Activated CD8-positive, alpha-beta T cell treated with anti-CD3 and anti-CD28 coated beads, Interleukin-2, amount 10 ng/mL, durations not matched to agents 7 days and 5 days (primary cell): ENCODE measurements at regions of chr3 and their contacts with region 1.

Region 1: GRCh38 chr3:14178247-14179113 is at the starts of genes LSM3 and XPC:
- DNase-seq: peak; percentile 97
- ATAC-seq: peak; percentile 91
- H3K4me3 Mint-ChIP-seq: peak within 1 kb of the TSS; percentile 98
- H3K27ac Mint-ChIP-seq: peak within 1 kb of the TSS; percentile 99
- H3K4me1 Mint-ChIP-seq: peaks cover 62% of the 10 kb centered on the region
- H3K27me3 Mint-ChIP-seq: no peaks in the 10 kb centered on the region
- total RNA-seq, gene LSM3: 19.2 to 20.2 TPM
- total RNA-seq, gene XPC: 29.4 to 31.6 TPM

Region 2: GRCh38 chr3:13895155-13896105 is 283.1 kb before region 1 on chr3:
- CTCF ChIA-PET with region 1: interaction called, 21 read pairs
- POLR2A ChIA-PET with region 1: interaction called, 10 read pairs
- DNase-seq: peak; percentile 98
- ATAC-seq: peak; percentile 99
- H3K4me3 Mint-ChIP-seq: peak overlapping the region; percentile 84
- H3K27ac Mint-ChIP-seq: peak overlapping the region; percentile 81
- H3K4me1 Mint-ChIP-seq: peaks cover 33% of the 10 kb centered on the region
- H3K27me3 Mint-ChIP-seq: peaks cover 2% of the 10 kb centered on the region

Region 3: DNA sequence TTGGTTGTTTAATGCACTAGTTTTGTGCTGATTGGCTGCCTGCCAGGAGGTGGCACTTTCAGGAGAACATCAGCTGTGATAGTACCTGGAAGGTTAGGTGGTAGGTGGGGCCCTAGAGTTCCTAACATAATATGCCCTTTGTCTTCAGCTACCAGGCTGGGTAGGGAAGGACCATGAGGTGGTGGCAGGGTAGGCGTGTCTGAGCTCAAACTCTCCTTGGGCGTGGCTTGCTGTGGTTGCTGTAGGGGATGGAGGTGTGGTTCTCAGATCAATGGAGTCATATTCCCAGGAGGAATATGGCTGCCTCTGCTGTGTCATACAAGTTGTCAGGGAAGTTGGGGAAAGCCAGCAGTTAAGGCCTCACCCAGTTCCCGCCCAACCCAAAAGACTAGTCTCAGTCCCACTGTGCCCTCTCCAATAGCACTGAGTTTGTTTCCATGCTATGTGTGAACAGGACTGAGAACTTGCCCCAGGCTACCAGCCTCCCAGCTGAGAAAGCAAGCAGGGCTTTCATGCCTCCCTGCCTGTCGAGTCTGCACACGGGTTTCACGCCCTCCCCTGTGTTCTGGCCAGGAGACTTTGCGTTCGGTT is 161.5 kb before region 1 on chr3:
- CTCF ChIA-PET with region 1: no interaction called
- POLR2A ChIA-PET with region 1: no interaction called
- DNase-seq: no peak
- ATAC-seq: no peak
- H3K4me3 Mint-ChIP-seq: no peak overlapping the region
- H3K27ac Mint-ChIP-seq: no peak overlapping the region
- H3K4me1 Mint-ChIP-seq: no peaks in the 10 kb centered on the region
- H3K27me3 Mint-ChIP-seq: peaks cover 31% of the 10 kb centered on the region

Region 4: DNA sequence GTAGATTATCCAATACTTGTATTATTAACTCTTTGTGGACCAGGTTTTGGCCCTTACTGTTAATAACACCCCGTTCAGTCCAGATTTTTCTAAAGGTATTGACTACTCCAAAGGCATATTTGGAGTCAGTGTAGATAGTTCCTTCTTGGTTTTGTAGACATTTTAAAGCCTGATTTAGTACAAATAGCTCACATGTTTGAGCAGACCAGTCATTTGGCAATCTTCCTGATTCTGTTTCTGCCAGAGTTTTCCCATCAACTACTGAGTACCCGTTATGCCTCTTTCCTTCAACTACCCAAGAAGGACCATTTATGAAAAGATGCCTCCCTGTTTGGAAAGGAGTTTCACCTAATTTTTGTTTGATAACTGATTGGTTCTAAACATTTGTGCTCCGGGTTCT is 135.8 kb before region 1 on chr3:
- CTCF ChIA-PET with region 1: no interaction called
- POLR2A ChIA-PET with region 1: no interaction called
- DNase-seq: no peak
- ATAC-seq: no peak
- H3K4me3 Mint-ChIP-seq: no peak overlapping the region
- H3K27ac Mint-ChIP-seq: no peak overlapping the region
- H3K4me1 Mint-ChIP-seq: no peaks in the 10 kb centered on the region
- H3K27me3 Mint-ChIP-seq: peaks cover 3% of the 10 kb centered on the region

Region 5: DNA sequence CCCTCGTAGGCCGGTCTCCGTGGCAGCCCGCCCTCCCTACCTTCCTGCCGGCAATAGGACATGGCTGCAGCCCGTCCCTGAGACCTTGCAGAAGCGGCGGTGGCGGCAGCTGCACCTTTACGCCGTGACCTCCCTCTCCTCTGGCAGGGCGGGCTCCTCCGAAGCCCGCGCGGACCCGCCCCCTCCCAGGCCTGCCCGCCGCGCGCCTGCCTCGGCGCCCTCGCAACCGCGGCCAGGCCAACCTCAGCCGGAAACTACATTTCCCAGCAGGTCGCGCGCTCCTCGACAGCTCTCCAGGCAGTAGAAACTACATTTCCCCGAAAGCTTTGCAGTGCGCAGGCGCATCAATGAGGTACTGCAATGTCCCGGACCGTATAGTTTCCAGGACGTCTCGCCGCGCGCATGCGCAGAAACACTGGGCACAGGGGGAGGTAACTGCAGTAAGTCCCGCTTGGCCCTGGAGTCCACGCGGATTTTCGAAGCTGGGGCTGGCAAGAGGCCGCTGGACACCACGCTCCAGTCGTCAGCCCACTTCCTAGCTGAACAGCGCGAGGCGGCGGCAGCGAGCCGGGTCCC is 53.8 kb before region 1 on chr3 and contains the starts of genes CHCHD4 and TMEM43:
- CTCF ChIA-PET with region 1: interaction called, 20 read pairs
- POLR2A ChIA-PET with region 1: interaction called, 60 read pairs
- DNase-seq: peak; percentile 99
- ATAC-seq: peak; percentile 90
- H3K4me3 Mint-ChIP-seq: peak within 1 kb of the TSS; percentile 93
- H3K27ac Mint-ChIP-seq: peak within 1 kb of the TSS; percentile 90
- H3K4me1 Mint-ChIP-seq: peaks cover 61% of the 10 kb centered on the region
- H3K27me3 Mint-ChIP-seq: no peaks in the 10 kb centered on the region
- total RNA-seq, gene CHCHD4: 17.3 to 18.1 TPM
- total RNA-seq, gene TMEM43: 27.9 to 28.8 TPM

Region 6: GRCh38 chr3:14144423-14145075 is 33.9 kb before region 1 on chr3:
- CTCF ChIA-PET with region 1: interaction called, 7 read pairs
- POLR2A ChIA-PET with region 1: interaction called, 26 read pairs
- DNase-seq: peak; percentile 86
- ATAC-seq: peak; percentile 85
- H3K4me3 Mint-ChIP-seq: peak overlapping the region; percentile 52
- H3K27ac Mint-ChIP-seq: peak overlapping the region; percentile 88
- H3K4me1 Mint-ChIP-seq: peaks cover 36% of the 10 kb centered on the region
- H3K27me3 Mint-ChIP-seq: no peaks in the 10 kb centered on the region

Region 7: GRCh38 chr3:14266361-14266760 is 87.9 kb after region 1 on chr3:
- CTCF ChIA-PET with region 1: no interaction called
- POLR2A ChIA-PET with region 1: no interaction called
- DNase-seq: no peak
- ATAC-seq: no peak
- H3K4me3 Mint-ChIP-seq: no peak overlapping the region
- H3K27ac Mint-ChIP-seq: no peak overlapping the region
- H3K4me1 Mint-ChIP-seq: no peaks in the 10 kb centered on the region
- H3K27me3 Mint-ChIP-seq: peaks cover 22% of the 10 kb centered on the region

Region 8: DNA sequence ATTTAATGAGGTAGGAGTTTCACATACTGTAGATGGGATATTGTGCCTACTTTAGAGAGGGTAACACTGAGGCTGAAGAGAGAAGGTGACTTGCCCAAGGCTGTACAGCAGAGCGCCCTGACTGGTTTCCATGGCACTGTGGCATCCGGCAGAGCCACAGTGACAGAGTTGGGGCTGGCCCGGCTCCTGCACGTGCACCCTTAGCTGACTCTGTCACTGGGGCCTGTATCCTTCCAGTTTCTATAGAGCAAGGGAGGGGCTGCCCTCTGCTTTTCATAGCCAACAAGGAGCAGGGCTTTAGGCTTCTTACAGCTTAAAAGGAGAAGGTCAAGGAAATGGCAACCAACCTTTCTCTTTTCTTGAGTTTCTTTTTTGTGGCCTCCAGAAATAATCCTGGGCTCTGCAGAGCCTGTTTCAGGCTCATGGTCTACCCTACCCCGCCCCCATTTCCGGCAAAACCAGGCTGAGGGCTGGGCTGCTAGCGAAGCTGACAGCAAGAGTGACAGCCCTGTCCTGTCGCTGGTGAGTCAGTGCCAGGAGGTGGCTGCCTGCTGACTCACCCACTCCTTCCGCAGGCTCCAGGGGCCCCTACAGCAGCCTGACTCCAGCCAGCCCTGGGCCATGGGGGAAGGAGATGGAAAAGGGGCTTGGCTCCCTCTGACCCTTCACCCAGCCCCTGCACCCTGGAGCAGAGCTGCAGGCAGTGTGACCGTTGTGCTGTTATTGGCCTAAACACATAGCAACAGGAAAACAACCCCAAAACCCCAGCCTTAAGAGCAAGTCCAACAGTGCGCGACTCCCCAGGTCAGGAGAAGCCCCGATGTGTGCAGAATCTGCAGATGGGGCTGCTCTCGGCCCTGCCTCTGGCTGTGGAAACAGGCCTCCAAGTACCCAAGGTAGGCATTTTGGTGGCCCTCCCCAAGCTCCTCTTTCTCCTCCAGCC is 253.7 kb after region 1 on chr3:
- CTCF ChIA-PET with region 1: no interaction called
- POLR2A ChIA-PET with region 1: interaction called, 11 read pairs
- DNase-seq: peak; percentile 98
- ATAC-seq: peak; percentile 91
- H3K4me3 Mint-ChIP-seq: peak overlapping the region; percentile 76
- H3K27ac Mint-ChIP-seq: peak overlapping the region; percentile 99
- H3K4me1 Mint-ChIP-seq: peaks cover 88% of the 10 kb centered on the region
- H3K27me3 Mint-ChIP-seq: no peaks in the 10 kb centered on the region

Region 9: GRCh38 chr3:14651440-14652251 is 473.2 kb after region 1 on chr3 and contains the start of gene CCDC174:
- CTCF ChIA-PET with region 1: no interaction called
- POLR2A ChIA-PET with region 1: interaction called, 11 read pairs
- DNase-seq: peak; percentile 97
- ATAC-seq: peak; percentile 97
- H3K4me3 Mint-ChIP-seq: peak within 1 kb of the TSS; percentile 98
- H3K27ac Mint-ChIP-seq: peak within 1 kb of the TSS; percentile 97
- H3K4me1 Mint-ChIP-seq: peaks cover 35% of the 10 kb centered on the region
- H3K27me3 Mint-ChIP-seq: no peaks in the 10 kb centered on the region
- total RNA-seq, gene CCDC174: 17.5 to 18.5 TPM